ENCODE measurements at regions of chr1 and their contacts with region 1.

Region 1: DNA sequence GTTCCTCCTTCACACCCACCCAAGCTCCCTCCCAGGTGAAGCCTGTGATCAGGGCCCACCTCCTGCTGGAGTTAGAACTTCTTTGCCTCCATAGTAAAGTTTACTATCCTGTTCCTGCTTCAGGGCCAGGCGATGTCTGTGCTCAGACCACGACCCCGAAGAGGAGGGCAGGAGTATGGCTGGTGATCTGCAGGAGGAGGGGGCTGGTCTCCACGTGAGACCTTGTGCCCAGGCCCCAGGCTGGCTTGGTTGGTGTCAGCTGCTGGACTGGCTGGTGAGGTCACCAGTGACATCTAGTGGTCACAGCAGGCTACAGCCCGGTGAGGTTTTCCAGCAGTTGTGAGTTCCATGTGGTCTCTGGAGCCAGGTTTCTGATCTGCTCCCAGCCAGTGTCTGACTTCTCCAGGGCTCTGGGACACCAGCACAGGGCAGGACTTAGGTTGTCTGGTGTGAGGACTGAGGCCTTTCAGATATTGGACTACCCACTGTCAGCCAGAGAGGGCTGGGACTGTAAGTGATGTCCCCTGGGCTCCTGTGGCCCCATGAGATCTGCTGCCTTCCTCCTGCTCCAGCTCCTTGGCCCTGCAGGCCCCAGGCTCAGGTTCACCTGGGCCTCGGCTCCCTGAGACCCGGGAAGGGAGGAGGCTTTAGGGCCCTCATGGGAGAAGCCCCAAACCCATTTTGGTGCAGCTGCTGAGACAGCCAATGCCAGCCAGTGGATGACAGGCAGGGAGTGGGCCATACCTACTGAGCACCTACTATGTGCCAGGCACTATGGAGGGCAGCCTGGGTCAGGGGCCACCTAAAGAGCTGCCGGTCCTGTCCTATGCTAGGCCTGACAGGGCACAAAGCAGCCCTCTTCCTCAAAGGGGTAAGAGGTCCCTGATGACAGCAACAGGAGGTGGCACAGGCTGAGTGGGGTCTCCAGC is 6.0 kb upstream of the UBL4B start:
- DNase-seq: peak; percentile 37 to 76
- ATAC-seq: peak; percentile 71 to 94 (median 89)
- H3K4me3 ChIP-seq: no peak overlapping the region
- H3K4me3 Mint-ChIP-seq: no peak overlapping the region
- H3K27ac ChIP-seq: no peak overlapping the region
- H3K27ac Mint-ChIP-seq: no peak overlapping the region
- H3K4me1 ChIP-seq: no peaks in the 10 kb centered on the region
- H3K4me1 Mint-ChIP-seq: peaks cover 5 to 6% of the 10 kb centered on the region in 2 donors
- H3K27me3 ChIP-seq: no peaks in the 10 kb centered on the region
- H3K27me3 Mint-ChIP-seq: peaks cover 9 to 11% of the 10 kb centered on the region in 2 donors
- CTCF ChIP-seq: peak; percentile 75

Region 2: DNA sequence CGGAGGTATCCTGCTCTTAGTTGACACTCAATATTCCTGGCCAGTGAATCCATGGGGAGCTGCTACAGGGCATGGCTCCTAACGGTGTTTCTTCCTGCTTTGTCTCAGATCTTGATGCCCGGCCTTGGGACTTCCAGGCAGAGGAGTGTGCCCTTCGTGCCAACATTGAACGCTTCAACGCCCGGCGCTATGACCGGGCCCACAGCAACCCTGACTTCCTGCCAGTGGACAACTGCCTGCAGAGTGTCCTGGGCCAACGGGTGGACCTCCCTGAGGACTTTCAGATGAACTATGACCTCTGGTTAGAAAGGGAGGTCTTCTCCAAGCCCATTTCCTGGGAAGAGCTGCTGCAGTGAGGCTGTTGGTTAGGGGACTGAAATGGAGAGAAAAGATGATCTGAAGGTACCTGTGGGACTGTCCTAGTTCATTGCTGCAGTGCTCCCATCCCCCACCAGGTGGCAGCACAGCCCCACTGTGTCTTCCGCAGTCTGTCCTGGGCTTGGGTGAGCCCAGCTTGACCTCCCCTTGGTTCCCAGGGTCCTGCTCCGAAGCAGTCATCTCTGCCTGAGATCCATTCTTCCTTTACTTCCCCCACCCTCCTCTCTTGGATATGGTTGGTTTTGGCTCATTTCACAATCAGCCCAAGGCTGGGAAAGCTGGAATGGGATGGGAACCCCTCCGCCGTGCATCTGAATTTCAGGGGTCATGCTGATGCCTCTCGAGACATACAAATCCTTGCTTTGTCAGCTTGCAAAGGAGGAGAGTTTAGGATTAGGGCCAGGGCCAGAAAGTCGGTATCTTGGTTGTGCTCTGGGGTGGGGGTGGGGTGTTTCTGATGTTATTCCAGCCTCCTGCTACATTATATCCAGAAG is 52.5 kb before region 1 on chr1:
- intact Hi-C with region 1: loop called (anchors 5 kb)
- DNase-seq: peak; percentile 65 to 81
- ATAC-seq: peak; percentile 82 to 95 (median 83)
- H3K4me3 ChIP-seq: no peak overlapping the region
- H3K4me3 Mint-ChIP-seq: no peak overlapping the region
- H3K27ac ChIP-seq: no peak overlapping the region
- H3K27ac Mint-ChIP-seq: no peak overlapping the region
- H3K4me1 ChIP-seq: no peaks in the 10 kb centered on the region
- H3K4me1 Mint-ChIP-seq: peaks cover 0 to 1% of the 10 kb centered on the region in 2 donors
- H3K27me3 ChIP-seq: no peaks in the 10 kb centered on the region
- H3K27me3 Mint-ChIP-seq: no peaks in the 10 kb centered on the region
- CTCF ChIP-seq: peak; percentile 88

Measured in natural killer cell (primary cell).